Activated CD4-positive, alpha-beta memory T cell treated with anti-CD3 and anti-CD28 coated beads for 36 hours (primary cell): ENCODE measurements at regions of chr5 and their contacts with region 1.

Region 1: GRCh38 chr5:154189819-154190594 is 526 bp upstream of the GALNT10 start:
- DNase-seq: peak; percentile 83
- H3K4me3 Mint-ChIP-seq: peak overlapping the region; percentile 80
- H3K27ac Mint-ChIP-seq: peak overlapping the region; percentile 55
- H3K4me1 Mint-ChIP-seq: peaks cover 39% of the 10 kb centered on the region
- H3K27me3 Mint-ChIP-seq: peaks cover 5% of the 10 kb centered on the region

Region 2: DNA sequence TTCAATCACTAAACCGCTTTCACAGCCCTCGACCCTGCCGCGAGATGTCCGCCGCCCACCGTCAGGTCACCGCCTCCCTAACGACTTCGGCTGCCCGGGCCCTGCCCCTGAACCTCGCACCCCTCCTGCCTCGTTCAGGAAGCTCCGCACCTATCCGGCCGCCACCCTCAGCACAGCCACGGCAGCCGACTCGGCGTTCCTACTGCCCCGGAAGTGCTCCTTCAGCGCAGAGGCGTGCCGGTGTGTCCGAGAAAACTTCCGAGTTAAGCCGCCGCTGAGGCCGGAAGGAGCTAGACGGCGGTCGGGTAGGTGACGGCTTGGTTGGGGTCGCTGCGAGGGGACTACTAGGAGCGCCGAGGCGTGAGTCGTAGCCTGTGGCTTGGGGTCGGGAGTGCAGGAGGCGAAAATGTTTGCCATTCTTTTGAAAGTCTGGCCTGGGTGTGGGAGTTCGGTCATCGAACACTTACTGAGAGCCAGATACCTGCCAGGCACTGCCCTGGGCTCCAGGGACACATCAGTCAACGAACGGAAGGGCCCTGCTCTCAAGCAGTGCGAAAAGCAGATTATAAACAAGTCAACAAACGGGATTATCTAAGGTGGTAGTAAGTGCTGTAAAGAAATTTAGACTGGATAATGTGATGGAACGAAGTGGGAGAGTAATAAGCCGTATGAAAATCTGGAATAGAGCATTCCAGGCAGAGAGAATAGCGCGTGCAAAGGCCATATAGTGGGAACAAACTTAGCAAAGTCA is 151.1 kb before region 1 on chr5 and contains the starts of genes FAM114A2 and MFAP3:
- CTCF ChIA-PET with region 1: no interaction called
- POLR2A ChIA-PET with region 1: interaction called, 11 read pairs
- intact Hi-C with region 1: loop called (anchors 1 kb)
- DNase-seq: peak; percentile 93
- H3K4me3 Mint-ChIP-seq: peak within 1 kb of the TSS; percentile 98
- H3K27ac Mint-ChIP-seq: peak within 1 kb of the TSS; percentile 93
- H3K4me1 Mint-ChIP-seq: peaks cover 47% of the 10 kb centered on the region
- H3K27me3 Mint-ChIP-seq: no peaks in the 10 kb centered on the region
- total RNA-seq, gene FAM114A2: 27.4 to 27.8 TPM
- total RNA-seq, gene MFAP3: 10.0 to 11.1 TPM

Region 3: DNA sequence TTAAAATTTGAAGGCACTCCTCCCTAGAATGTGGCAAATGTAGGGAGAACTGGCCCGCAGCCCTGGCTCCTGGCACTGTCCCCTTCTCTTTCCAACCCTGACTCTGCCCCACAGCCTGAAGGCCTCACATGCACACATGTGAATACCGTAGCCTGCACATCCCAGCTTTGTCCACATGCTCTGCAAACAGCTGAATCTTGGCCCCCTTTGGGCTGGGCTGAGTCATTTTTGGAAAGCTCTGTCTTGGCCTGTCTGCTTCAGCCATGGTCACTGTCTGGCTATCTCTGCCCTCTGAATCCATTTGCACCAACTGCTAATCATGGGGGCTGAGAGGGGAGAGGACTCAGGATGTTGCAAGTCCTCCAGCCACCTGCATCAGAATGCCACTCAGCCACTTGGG is 21.6 kb before region 1 on chr5:
- CTCF ChIA-PET with region 1: no interaction called
- POLR2A ChIA-PET with region 1: no interaction called
- intact Hi-C with region 1: no loop called
- DNase-seq: no peak
- H3K4me3 Mint-ChIP-seq: no peak overlapping the region
- H3K27ac Mint-ChIP-seq: no peak overlapping the region
- H3K4me1 Mint-ChIP-seq: no peaks in the 10 kb centered on the region
- H3K27me3 Mint-ChIP-seq: peaks cover 16% of the 10 kb centered on the region

Region 4: DNA sequence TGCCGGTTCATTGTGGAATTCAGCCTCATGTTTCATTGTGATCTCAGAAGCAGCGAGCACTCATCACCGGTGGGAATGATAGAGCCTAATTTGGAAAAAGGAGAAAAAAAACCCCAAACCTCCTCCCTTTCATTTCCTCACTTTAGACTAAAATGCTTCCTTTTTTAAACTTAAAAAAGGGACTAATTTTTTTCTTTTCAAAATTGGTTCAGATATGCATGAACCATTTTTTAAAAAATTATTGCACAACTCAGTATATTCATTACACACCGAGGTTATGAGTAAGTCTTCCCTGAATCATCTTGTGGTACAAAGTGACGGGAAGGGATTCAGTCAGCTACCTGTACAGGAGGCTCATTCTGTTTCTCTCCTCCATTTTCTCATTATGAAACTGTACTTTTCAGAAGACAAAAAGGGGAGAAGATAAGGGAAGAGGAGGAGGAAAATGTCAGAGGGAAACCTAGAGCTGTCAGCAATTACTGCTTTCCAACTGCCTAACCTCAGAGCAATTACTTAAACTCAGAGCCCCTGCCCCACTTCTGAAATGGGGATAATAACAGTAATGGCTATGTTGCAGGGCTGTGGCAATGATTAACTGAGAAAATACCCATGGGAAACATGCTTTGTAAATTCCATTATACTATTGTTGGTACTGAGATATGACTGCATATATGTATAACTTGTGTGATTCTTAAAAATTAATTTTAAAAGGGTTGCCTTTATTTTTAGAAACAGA is 24.5 kb after region 1 on chr5:
- CTCF ChIA-PET with region 1: interaction called, 30 read pairs
- POLR2A ChIA-PET with region 1: interaction called, 4 read pairs
- intact Hi-C with region 1: no loop called
- DNase-seq: no peak
- H3K4me3 Mint-ChIP-seq: peak overlapping the region; percentile 47
- H3K27ac Mint-ChIP-seq: peak overlapping the region; percentile 86
- H3K4me1 Mint-ChIP-seq: peaks cover 53% of the 10 kb centered on the region
- H3K27me3 Mint-ChIP-seq: no peaks in the 10 kb centered on the region

Region 5: DNA sequence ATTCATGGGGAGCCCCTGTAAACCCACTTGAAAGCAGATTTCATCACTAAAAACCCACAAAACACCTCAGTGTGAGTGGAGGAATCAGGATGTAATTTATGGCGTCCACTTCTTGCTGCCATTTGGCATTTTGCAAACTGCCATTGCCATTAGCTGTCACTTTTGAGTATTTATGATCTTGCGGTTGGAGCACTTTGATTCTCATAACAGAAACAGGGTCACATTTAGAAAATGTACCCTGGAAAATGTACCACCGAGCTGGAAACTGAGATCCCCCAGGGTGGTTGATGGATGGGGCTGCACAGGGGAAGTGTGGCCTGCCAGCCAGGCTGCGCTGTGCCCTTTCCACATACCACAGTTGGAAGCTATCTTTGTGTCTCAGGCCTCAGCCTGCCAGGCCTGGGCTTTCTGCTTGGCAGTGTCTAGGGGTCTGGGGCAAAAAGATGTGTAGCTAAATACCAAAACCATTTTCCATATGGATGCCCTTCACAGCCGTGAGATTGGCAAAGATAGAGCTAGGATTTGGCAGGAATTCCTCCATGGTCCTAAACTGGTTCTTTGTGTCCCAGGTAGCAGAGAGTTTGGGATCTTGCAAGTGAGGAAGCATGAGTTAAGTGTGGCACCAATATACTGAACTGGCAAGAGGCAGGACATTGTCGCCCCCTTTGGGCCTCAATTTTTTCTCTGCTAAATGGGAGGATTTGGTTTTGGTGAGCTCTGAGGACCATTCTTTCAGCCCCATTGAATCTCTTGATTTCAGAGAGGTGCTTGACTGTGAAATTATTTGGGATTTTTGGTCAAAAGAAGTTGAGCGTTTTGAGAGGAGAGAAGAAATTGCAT is 46.7 kb after region 1 on chr5:
- CTCF ChIA-PET with region 1: interaction called, 18 read pairs
- POLR2A ChIA-PET with region 1: no interaction called
- intact Hi-C with region 1: no loop called
- DNase-seq: peak; percentile 33
- H3K4me3 Mint-ChIP-seq: no peak overlapping the region
- H3K27ac Mint-ChIP-seq: no peak overlapping the region
- H3K4me1 Mint-ChIP-seq: peaks cover 27% of the 10 kb centered on the region
- H3K27me3 Mint-ChIP-seq: no peaks in the 10 kb centered on the region

Region 6: GRCh38 chr5:154276973-154277331 is 86.9 kb after region 1 on chr5:
- CTCF ChIA-PET with region 1: no interaction called
- POLR2A ChIA-PET with region 1: no interaction called
- intact Hi-C with region 1: no loop called
- DNase-seq: no peak
- H3K4me3 Mint-ChIP-seq: no peak overlapping the region
- H3K27ac Mint-ChIP-seq: no peak overlapping the region
- H3K4me1 Mint-ChIP-seq: peaks cover 42% of the 10 kb centered on the region
- H3K27me3 Mint-ChIP-seq: no peaks in the 10 kb centered on the region

Region 7: GRCh38 chr5:154445422-154446182 is 255.6 kb after region 1 on chr5 and contains the start of gene SAP30L:
- CTCF ChIA-PET with region 1: no interaction called
- POLR2A ChIA-PET with region 1: interaction called, 3 read pairs
- intact Hi-C with region 1: loop called (anchors 2 kb)
- DNase-seq: peak; percentile 97
- H3K4me3 Mint-ChIP-seq: peak within 1 kb of the TSS; percentile 99
- H3K27ac Mint-ChIP-seq: peak within 1 kb of the TSS; percentile 94
- H3K4me1 Mint-ChIP-seq: peaks cover 45% of the 10 kb centered on the region
- H3K27me3 Mint-ChIP-seq: no peaks in the 10 kb centered on the region
- total RNA-seq, gene SAP30L: 32.0 to 34.2 TPM